MCF 10A (cell line): ENCODE measurements at regions of chr1 and their contacts with region 1.

Region 1: GRCh38 chr1:227437495-227438008 is 119.3 kb upstream of the CDC42BPA start:
- DNase-seq: peak; percentile 83
- H3K4me3 Mint-ChIP-seq: peak overlapping the region; percentile 58
- H3K27ac Mint-ChIP-seq: peak overlapping the region; percentile 53
- H3K4me1 Mint-ChIP-seq: peaks cover 16% of the 10 kb centered on the region
- H3K27me3 Mint-ChIP-seq: no peaks in the 10 kb centered on the region
- CTCF ChIP-seq: peak; percentile 80

Region 2: GRCh38 chr1:226827968-226828513 is 609.5 kb before region 1 on chr1:
- CTCF ChIA-PET with region 1: interaction called, 3 read pairs
- POLR2A ChIA-PET with region 1: no interaction called
- intact Hi-C with region 1: loop called (anchors 1 kb)
- DNase-seq: peak; percentile 100
- H3K4me3 Mint-ChIP-seq: no peak overlapping the region
- H3K27ac Mint-ChIP-seq: no peak overlapping the region
- H3K4me1 Mint-ChIP-seq: no peaks in the 10 kb centered on the region
- H3K27me3 Mint-ChIP-seq: no peaks in the 10 kb centered on the region
- CTCF ChIP-seq: peak; percentile 100

Region 3: GRCh38 chr1:227131193-227131592 is 306.4 kb before region 1 on chr1:
- CTCF ChIA-PET with region 1: interaction called, 8 read pairs
- POLR2A ChIA-PET with region 1: no interaction called
- intact Hi-C with region 1: loop called (anchors 1 kb)
- DNase-seq: peak; percentile 66
- H3K4me3 Mint-ChIP-seq: no peak overlapping the region
- H3K27ac Mint-ChIP-seq: no peak overlapping the region
- H3K4me1 Mint-ChIP-seq: peaks cover 7% of the 10 kb centered on the region
- H3K27me3 Mint-ChIP-seq: no peaks in the 10 kb centered on the region
- CTCF ChIP-seq: peak; percentile 61

Region 4: GRCh38 chr1:227234998-227235405 is 202.6 kb before region 1 on chr1:
- CTCF ChIA-PET with region 1: interaction called, 51 read pairs
- POLR2A ChIA-PET with region 1: no interaction called
- intact Hi-C with region 1: loop called (anchors 1 kb)
- DNase-seq: peak; percentile 84
- H3K4me3 Mint-ChIP-seq: no peak overlapping the region
- H3K27ac Mint-ChIP-seq: no peak overlapping the region
- H3K4me1 Mint-ChIP-seq: peaks cover 15% of the 10 kb centered on the region
- H3K27me3 Mint-ChIP-seq: no peaks in the 10 kb centered on the region
- CTCF ChIP-seq: peak; percentile 78

Region 5: GRCh38 chr1:227449051-227449450 is 11.5 kb after region 1 on chr1:
- CTCF ChIA-PET with region 1: interaction called, 8 read pairs
- POLR2A ChIA-PET with region 1: interaction called, 10 read pairs
- intact Hi-C with region 1: no loop called
- DNase-seq: peak; percentile 80
- H3K4me3 Mint-ChIP-seq: no peak overlapping the region
- H3K27ac Mint-ChIP-seq: no peak overlapping the region
- H3K4me1 Mint-ChIP-seq: peaks cover 6% of the 10 kb centered on the region
- H3K27me3 Mint-ChIP-seq: peaks cover 6% of the 10 kb centered on the region
- CTCF ChIP-seq: peak; percentile 73

Region 6: DNA sequence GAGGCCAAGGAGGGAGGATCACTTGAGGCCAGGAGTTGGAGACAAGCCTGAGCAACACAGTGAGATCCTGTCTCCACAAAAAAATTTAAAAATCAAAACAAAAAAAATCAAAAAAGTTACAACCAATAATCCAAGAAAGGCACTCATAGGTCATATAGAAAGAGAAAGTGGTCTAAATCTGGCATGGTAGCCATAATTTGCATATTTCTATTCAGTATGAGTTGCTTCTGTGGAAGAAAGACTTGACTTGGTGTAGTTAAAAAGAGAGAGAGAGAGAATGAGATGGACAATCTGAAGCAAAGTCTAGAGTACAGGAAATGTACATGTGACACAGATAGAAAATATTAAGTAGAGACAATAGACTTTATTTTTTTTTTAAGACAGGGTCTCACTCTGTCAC is 275.1 kb after region 1 on chr1:
- CTCF ChIA-PET with region 1: no interaction called
- POLR2A ChIA-PET with region 1: no interaction called
- intact Hi-C with region 1: no loop called
- DNase-seq: no peak
- H3K4me3 Mint-ChIP-seq: no peak overlapping the region
- H3K27ac Mint-ChIP-seq: no peak overlapping the region
- H3K4me1 Mint-ChIP-seq: peaks cover 5% of the 10 kb centered on the region
- H3K27me3 Mint-ChIP-seq: no peaks in the 10 kb centered on the region
- CTCF ChIP-seq: no peak